ENCODE measurements at regions of chr11 and their contacts with region 1.

Region 1: DNA sequence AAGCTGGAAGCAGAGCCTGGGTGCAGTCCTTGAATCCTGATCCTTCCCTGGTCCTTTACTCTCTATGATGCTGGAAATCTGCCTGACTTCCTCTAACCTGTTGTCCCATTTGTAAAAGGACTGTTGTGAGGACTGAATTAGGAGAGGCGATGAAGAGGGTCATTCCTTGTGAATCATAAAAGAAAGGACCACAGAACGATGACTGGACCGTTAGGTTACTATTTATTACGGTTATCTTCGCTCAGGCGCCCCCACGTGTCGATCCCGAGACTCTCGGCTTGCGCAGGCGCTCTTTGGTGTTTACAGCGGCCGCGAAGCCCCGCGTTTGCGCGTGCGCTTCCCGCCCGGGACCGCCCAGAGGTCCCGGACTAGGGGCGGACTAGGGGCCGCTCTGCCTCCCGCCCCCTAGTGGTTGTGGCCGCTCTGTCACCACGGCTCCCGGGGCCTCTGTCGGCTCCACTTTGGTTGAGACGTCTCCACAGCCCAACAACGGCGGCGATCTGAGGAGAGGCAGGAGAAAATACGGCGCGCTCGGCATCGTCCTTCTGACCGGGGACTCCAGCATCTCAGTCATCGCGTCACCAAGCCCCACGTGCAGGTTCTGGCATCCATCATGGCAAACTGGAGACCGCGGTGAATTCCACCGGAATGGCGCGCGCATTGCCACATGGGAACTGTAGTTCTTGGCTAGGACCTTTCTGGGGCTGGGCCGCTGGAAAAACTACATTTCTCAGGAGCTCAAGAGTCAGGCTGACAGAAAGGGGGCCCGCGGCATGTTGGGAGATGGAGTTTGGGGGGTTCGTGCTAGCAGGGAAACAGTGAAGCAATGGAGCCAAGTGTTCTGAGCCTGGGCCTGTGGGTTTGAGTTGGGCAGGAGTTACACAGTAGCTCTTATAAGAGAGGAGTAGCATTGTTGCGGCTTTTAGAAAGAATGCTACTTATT is at the start of gene STARD10:
- DNase-seq: peak; percentile 96 to 98 (median 97)
- ATAC-seq: peak; percentile 95 to 96 (median 96)
- H3K4me3 ChIP-seq: peak within 1 kb of the TSS; percentile 49 to 80 (median 68)
- H3K27ac ChIP-seq: peak within 1 kb of the TSS; percentile 51 to 97 (median 92)
- H3K4me1 ChIP-seq: peaks cover 0 to 37% (median 28%) of the 10 kb centered on the region in 12 donors
- H3K27me3 ChIP-seq: no peaks in the 10 kb centered on the region
- CTCF ChIP-seq: peak; percentile 94 to 100 (median 98)
- POLR2A ChIP-seq: peak in 1 of 2 donors; percentile 52
- total RNA-seq, gene STARD10: 35.2 to 78.8 (median 55.2) TPM

Region 2: GRCh38 chr11:72727521-72727920 is 66.2 kb before region 1 on chr11:
- intact Hi-C with region 1: loop called (anchors 1 to 5 kb)
- DNase-seq: peak in 2 of 5 donors; percentile 23 to 40
- ATAC-seq: no peak
- H3K4me3 ChIP-seq: no peak overlapping the region
- H3K27ac ChIP-seq: no peak overlapping the region
- H3K4me1 ChIP-seq: peaks cover 0 to 45% (median 11%) of the 10 kb centered on the region in 12 donors
- H3K27me3 ChIP-seq: no peaks in the 10 kb centered on the region
- CTCF ChIP-seq: no peak
- POLR2A ChIP-seq: no peak

Region 3: DNA sequence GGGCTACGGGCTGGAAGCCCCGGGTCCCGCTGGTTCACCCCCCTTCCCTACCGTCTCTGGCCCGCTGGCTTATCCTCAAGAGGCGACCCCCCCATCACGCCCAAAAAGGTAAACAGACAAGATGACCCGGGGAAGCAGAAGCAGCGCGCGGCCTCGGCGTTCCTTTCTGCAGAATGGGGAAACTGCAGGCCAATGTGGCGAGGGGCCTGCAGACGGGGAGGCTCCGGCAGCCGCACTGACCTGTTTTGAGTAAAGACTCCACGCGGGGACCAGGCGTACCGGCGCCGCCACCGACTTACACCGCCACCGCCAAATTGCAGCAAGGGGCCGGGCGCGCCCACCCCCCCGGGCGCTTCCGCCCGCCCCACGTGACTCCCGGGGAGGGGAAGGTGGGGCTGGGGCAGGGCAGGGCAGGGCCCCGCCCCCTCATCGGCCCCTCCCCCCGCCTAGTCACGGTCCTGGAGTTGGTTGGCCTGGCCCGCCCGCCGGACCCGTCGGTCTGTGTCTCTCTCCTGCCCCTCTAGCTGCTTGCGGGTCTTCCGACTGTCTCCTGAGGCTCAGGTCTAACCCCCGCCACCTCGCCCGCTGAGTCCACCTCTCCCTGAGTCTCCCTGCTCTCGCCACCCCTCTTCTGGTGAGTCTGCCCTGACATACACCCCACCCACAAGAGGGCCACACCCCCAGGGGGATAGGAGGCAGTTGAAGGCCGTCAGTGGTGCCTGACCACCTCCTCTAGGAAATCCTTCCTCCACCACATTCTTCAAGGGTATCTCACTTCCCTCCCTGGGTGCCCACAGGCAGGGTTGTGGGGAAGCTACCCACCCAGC is 41.4 kb before region 1 on chr11 and contains the start of gene ARAP1:
- intact Hi-C with region 1: loop called in 1 of 10 experiments (anchors 2 kb)
- DNase-seq: peak; percentile 71 to 86 (median 78)
- ATAC-seq: peak; percentile 75 to 94 (median 92)
- H3K4me3 ChIP-seq: peak within 1 kb of the TSS; percentile 56 to 88 (median 72)
- H3K27ac ChIP-seq: peak within 1 kb of the TSS in 7 of 12 donors; percentile 34 to 67 (median 58)
- H3K4me1 ChIP-seq: peaks cover 0 to 30% (median 15%) of the 10 kb centered on the region in 12 donors
- H3K27me3 ChIP-seq: no peaks in the 10 kb centered on the region
- CTCF ChIP-seq: peak in 3 of 12 donors; percentile 4 to 12 (median 6)
- POLR2A ChIP-seq: no peak
- total RNA-seq, gene ARAP1: 35.4 to 116 (median 44.0) TPM